Cardiac septum (tissue), 1 donor: ENCODE measurements at regions of chr22 and their contacts with region 1.

Region 1: DNA sequence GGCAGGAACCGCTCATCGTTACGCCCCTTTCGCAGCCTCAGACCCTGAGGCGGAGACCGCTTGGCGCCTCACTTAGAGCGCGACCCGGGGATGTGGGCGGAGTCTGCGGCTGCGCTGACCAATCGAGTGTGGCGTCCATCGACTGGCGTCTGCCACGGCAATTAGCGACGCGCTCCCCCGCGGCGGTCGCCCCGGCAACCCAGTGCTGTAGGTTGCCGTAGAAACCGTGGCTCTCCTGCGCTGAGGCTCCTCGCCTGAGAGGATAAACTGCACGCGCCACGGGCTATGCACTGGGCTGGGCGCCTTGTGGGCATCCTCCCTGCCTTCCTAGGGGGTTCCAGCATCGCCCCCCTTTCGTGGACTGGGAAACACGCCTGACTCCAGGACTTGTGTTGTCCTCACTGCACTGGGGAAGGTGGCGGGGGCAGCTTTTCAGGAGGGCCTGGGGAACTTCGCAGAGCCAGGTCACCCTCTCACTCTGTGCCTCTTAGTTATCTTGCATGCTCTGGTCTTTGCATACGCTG is 701 bp upstream of the P2RX6 start:
- DNase-seq: peak; percentile 91

Region 2: GRCh38 chr22:21045585-21046294 is 31.5 kb after region 1 on chr22 and contains the start of gene LRRC74B:
- intact Hi-C with region 1: loop called (anchors 5 kb)
- DNase-seq: peak; percentile 89
- total RNA-seq, gene LRRC74B: not detected

Region 3: DNA sequence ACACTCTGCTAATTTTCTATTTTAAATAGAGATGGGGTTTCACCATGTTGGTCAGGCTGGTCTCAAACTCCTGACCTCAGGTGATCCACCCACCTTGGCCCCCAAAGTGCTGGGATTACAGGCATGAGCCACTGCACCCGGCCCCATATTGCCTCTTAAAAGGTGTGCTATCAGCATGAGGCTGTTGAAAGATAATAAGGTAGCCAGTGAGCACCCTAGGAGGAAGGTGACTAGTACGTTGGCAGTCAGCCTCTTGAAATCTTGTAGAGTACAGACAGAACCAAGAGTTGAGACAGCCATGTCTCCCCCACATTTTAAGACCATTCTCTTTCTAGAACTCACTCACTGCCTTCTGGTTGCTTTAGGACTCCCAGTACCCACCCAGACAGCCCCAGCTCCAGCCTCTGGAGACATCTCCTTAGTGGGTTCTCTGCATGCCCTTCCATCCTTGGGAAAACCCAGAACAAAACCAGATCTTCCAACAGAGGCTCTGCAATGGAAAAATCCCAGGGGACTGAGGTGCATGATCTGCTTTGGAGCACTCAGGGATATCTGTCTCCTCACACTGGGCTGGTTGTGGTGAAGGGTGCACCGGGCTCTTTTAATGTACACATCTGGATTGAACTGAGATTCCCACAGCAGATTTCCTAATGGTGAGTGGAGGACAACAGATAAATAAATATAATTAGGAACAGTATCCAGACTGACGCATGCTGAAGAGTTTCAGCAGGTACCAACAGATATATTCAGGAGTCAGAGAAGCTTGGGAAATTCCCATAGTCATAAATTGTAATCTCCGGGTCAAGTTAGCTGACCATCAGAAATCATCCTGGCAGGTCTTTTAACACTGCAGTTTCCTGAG is 80.9 kb after region 1 on chr22:
- intact Hi-C with region 1: no loop called
- DNase-seq: no peak